ENCODE measurements at regions of chr11 and their contacts with region 1.

Region 1: DNA sequence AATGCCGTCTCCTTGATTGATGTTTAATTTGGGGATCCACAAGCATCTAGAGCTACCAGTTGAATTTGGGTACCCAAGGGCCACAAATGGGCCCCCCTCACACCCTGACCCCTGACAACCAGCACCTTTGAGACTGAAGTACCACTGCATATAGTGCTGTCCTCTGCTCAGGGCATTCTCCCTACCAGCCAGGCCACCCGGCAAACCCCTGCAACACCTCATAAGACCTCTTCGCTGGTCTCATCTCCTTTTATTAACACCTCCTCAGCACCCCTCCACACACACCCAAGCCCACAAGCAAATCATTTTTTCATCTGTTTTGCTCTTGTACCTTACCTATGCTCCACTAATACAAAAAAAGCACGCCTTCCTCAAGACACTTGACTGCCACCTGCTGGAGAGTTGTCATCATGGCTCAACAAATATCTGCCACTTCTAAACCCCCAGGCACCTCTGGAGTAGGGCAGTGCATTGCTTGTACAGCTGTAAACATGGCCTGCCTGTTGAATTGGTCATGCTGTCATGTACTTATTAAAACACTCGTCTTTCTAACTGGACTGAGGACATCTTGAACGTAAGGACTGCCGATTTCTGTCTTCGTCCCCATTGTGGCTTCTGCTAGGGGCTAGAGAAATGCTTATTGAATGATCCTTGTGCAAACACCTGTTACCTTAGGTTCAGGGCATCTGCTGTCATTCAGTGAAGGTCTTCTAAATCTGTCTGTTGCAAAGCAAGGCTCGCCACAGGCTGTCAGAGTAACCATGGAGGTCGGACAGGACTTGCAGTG is 66.5 kb downstream of the BMAL1 start:
- DNase-seq: peak; percentile 65
- H3K4me3 ChIP-seq: no peak overlapping the region
- H3K27ac ChIP-seq: no peak overlapping the region
- H3K4me1 ChIP-seq: no peaks in the 10 kb centered on the region
- H3K27me3 ChIP-seq: no peaks in the 10 kb centered on the region
- CTCF ChIP-seq: peak; percentile 70 to 82 (median 79)
- POLR2A ChIP-seq: no peak

Region 2: GRCh38 chr11:12963792-12964536 is 380.2 kb before region 1 on chr11:
- intact Hi-C with region 1: loop called (anchors 10 kb)
- DNase-seq: peak; percentile 61
- H3K4me3 ChIP-seq: no peak overlapping the region
- H3K27ac ChIP-seq: no peak overlapping the region
- H3K4me1 ChIP-seq: no peaks in the 10 kb centered on the region
- H3K27me3 ChIP-seq: no peaks in the 10 kb centered on the region
- CTCF ChIP-seq: peak; percentile 63 to 91 (median 84)
- POLR2A ChIP-seq: no peak

Region 3: DNA sequence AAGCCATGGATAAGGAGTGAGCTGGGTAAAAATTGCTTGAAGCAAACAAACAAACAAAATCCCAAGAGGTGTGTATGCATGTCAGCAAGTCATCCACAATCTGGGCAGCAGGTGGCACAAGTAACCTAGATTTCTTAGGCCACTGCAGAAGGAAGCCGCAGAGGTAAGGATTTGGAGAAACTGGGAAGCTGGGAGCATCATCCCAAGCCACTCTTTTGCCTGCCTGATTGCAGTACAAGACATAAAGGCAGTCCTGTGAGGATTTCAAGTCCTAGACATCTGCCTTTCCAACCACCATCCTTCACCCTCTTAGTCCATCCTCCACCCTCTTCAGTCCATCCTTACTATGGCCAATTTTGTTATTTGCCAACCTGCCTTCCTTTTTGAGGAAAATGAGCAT is 133.7 kb before region 1 on chr11:
- intact Hi-C with region 1: loop called (anchors 2 kb)
- DNase-seq: peak; percentile 69
- H3K4me3 ChIP-seq: no peak overlapping the region
- H3K27ac ChIP-seq: no peak overlapping the region
- H3K4me1 ChIP-seq: no peaks in the 10 kb centered on the region
- H3K27me3 ChIP-seq: no peaks in the 10 kb centered on the region
- CTCF ChIP-seq: peak; percentile 47 to 85 (median 67)
- POLR2A ChIP-seq: no peak

Region 4: DNA sequence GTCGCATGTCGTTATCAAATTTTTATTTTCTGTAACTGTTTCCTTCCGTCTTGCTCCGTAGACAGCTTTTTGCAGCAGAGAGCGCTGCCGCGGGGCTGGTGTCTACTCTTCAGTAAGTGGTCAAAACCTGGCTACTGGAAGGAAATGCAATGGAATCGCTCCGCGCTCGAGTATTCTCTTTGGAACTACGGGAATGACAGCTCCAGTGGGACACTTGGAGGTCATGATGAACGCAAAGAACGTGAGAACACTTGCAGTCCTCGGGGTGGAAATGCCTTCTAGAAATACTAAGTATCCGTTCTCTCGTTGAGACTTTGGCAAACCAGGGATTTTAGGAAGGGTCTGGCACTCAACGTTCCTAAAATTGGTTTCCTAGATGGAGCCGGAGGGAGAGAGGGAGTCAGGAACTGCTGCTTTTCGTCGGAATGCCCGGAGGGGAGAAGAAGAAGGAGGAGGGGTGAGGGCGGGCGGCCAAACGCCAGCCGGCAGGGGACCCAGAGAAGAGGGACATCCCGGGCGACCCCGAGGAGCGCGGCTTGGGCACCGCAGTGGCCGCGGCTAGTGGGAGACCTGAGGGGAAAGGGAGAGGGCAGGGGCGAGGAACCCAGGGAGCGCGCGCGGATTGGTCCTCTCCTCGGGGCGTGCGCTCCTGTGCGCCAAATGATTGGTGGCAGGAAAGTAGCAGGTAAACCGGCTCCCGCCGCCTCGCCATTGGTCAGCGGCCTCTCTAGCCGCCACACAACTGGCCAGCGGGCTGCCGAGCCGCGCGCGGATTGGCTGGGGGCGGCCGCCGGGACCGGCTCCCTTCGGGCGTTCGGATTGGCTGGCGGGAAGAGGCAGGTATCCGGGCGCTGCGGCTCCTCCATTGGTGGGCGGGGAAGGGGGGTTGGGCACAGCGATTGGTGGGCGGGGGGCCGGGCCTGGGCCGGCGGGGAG is 67.0 kb before region 1 on chr11:
- intact Hi-C with region 1: loop called (anchors 5 kb)
- DNase-seq: peak; percentile 99
- H3K4me3 ChIP-seq: peak overlapping the region; percentile 90 to 91
- H3K27ac ChIP-seq: peak overlapping the region; percentile 83 to 84
- H3K4me1 ChIP-seq: no peaks in the 10 kb centered on the region
- H3K27me3 ChIP-seq: no peaks in the 10 kb centered on the region
- CTCF ChIP-seq: no peak
- POLR2A ChIP-seq: peak; percentile 62